Heart left ventricle (tissue), 16 donors: ENCODE measurements at regions of chr9 and their contacts with region 1.

Region 1: GRCh38 chr9:129884220-129885017 is 49.2 kb downstream of the USP20 start:
- DNase-seq: peak; percentile 86 to 95 (median 89)
- ATAC-seq: peak; percentile 61 to 78 (median 76)
- H3K4me3 ChIP-seq: peak overlapping the region in 11 of 12 donors; percentile 1 to 57 (median 48)
- H3K27ac ChIP-seq: peak overlapping the region; percentile 12 to 94 (median 84)
- H3K4me1 ChIP-seq: peaks cover 3 to 61% (median 38%) of the 10 kb centered on the region in 12 donors
- H3K27me3 ChIP-seq: no peaks in the 10 kb centered on the region
- CTCF ChIP-seq: no peak
- POLR2A ChIP-seq: no peak

Region 2: DNA sequence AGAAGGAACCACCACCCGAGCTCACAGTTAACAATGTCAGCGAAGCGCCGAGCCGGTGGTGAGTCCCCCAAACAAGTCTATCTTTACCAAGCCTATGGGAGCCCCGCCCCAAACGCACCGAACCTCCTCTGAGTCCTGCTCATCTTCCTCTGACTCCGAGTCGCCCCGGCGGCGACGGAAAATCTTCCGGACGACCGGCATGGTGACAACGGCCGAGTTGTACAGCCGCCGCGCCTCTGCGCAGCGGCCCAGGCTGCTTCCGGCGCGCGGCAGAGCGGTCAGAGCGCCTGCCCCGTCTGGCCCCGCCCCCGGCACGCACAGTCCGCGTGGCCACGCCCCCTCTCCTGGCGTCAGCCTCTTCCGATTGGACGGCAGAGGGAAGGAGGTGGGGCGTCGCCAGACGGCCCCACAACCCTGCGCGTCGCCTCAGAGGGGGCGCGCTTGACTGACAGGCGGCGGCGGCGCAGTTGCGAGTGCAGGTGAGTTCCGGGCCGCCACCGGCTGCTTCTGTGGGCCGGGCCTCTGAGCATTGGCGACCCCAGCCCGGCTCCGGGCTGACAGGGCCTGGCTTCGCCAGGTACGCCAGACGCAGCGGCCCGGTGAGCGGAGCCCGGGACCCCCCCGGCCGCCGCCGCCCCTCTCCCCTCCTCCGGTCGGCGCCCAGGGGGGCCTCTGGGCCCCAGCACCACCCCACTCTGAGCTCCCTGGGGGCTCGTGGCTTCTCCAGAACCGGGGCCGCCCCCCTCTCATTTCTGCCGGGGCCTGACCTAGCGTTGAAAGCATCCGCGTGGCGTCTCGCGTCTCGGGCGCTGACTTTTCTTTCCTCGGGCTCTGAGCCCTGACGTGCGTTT is 49.2 kb before region 1 on chr9 and contains the starts of genes C9orf78 and USP20:
- intact Hi-C with region 1: loop called in 1 of 10 experiments (anchors 2 kb)
- DNase-seq: peak; percentile 96 to 98 (median 97)
- ATAC-seq: peak; percentile 99 to 100 (median 100)
- H3K4me3 ChIP-seq: peak within 1 kb of the TSS; percentile 72 to 100 (median 88)
- H3K27ac ChIP-seq: peak within 1 kb of the TSS in 11 of 12 donors; percentile 61 to 96 (median 83)
- H3K4me1 ChIP-seq: peaks cover 0 to 42% (median 18%) of the 10 kb centered on the region in 12 donors
- H3K27me3 ChIP-seq: no peaks in the 10 kb centered on the region
- CTCF ChIP-seq: peak in 2 of 12 donors; percentile 16 to 25
- POLR2A ChIP-seq: peak; percentile 78 to 94
- total RNA-seq, gene C9orf78: 28.4 to 54.8 (median 32.5) TPM
- total RNA-seq, gene USP20: 9.5 to 19.7 (median 13.1) TPM

Region 3: GRCh38 chr9:130042833-130043653 is 158.6 kb after region 1 on chr9 and contains the start of gene FNBP1:
- intact Hi-C with region 1: loop called in 6 of 10 experiments (anchors 1 to 5 kb)
- DNase-seq: peak; percentile 85 to 92 (median 88)
- ATAC-seq: peak; percentile 77 to 96 (median 93)
- H3K4me3 ChIP-seq: peak within 1 kb of the TSS; percentile 65 to 97 (median 94)
- H3K27ac ChIP-seq: peak within 1 kb of the TSS; percentile 89 to 97 (median 94)
- H3K4me1 ChIP-seq: peaks cover 0 to 67% (median 24%) of the 10 kb centered on the region in 12 donors
- H3K27me3 ChIP-seq: no peaks in the 10 kb centered on the region
- CTCF ChIP-seq: no peak
- POLR2A ChIP-seq: peak; percentile 9 to 81
- total RNA-seq, gene FNBP1: 16.6 to 47.3 (median 24.8) TPM

Region 4: DNA sequence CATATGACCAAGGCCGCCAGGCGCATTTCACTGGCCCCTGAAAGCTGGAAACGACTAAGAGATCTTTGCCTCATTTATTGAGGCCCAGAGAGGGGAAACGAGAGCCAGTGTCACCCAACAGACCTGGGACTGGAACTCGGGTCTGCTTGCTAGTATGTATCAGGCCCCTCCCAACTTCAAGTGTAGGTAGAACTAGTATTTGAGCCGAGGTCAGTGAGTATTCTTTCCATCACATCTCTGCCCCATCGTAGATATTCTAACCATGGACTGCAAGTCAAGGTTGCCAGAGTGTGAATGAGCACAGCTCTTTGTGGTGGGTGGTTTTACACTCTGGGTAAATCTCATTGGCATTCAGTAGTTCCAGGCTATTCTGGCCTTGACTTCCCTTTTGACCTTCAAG is 211.5 kb after region 1 on chr9:
- intact Hi-C with region 1: loop called in 9 of 10 experiments (anchors 2 to 10 kb)
- DNase-seq: no peak
- ATAC-seq: no peak
- H3K4me3 ChIP-seq: no peak overlapping the region
- H3K27ac ChIP-seq: no peak overlapping the region
- H3K4me1 ChIP-seq: peaks cover 0 to 10% (median 0%) of the 10 kb centered on the region in 12 donors
- H3K27me3 ChIP-seq: no peaks in the 10 kb centered on the region
- CTCF ChIP-seq: no peak
- POLR2A ChIP-seq: no peak

Region 5: DNA sequence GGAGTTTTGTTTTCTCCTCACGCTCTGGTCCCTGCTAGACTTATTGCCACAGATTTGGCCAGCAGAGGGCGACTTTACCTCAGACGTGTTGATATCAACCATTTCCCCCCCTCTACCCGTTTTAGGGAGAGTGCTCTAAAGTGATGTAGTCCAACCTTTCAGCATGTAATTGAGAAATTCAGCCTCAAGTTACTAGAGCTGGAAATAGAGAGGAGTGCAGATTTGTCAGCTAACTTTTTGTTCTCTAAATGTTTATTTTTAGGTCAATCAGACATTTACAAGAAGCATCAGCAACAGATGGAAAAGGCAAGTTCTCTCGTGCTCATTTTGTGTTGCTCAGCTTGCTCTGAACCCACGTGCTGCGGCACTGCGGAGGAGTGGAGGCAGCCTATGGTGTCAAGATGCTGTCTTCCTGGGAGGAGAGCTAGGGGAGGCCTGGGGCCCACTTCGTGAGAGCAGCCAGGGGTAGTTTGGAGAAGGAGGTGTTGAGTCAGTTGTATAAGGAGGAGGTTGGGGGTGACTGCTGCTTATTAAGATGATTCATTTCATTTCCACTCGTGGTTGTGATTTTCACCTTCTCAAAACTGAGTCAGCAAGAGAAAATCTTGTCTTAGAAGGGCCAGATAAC is 222.9 kb after region 1 on chr9:
- intact Hi-C with region 1: loop called in 6 of 10 experiments (anchors 2 to 10 kb)
- DNase-seq: peak; percentile 69 to 91 (median 79)
- ATAC-seq: peak in 3 of 4 donors; percentile 80 to 87 (median 86)
- H3K4me3 ChIP-seq: no peak overlapping the region
- H3K27ac ChIP-seq: peak overlapping the region in 1 of 12 donors; percentile 73
- H3K4me1 ChIP-seq: peaks cover 0 to 9% (median 0%) of the 10 kb centered on the region in 12 donors
- H3K27me3 ChIP-seq: no peaks in the 10 kb centered on the region
- CTCF ChIP-seq: peak; percentile 69 to 86 (median 80)
- POLR2A ChIP-seq: no peak

Region 6: DNA sequence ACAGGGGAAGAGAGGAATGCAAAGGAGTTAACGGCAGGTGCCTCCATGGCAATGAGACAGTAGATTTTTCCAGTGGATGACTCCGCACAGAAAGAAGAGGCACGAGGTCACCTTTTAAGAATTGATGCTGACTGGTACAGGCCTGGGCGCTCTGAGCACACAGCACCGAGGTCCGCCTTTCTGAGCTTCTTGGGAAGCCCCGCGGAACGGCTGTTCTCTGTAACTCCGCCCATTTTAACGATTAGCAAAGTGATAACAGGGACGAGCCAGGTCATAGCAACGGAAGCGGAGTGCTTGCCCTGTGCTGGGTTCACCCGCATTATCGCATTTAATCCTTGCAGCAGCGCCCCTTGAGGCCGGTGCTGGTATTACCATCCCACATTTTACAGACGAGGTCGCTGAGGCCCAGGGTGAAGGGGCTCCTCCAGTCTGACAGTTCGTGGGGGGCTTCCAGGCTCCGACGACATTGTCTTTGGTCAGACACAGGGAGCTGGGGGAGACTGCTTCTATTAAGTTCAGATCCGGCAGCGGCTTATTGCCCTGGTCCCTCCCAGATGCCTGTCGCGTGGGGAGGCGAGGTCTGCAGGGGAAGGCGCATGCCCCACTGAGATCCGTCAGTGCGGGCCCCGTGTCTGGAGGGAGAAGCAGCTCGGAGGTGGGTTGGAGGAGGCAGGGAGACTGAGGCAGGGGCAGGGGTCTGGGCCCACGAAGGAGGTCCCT is 358.8 kb after region 1 on chr9:
- intact Hi-C with region 1: loop called in 8 of 10 experiments (anchors 5 to 10 kb)
- DNase-seq: peak; percentile 50 to 81 (median 60)
- ATAC-seq: peak; percentile 63 to 72 (median 70)
- H3K4me3 ChIP-seq: peak overlapping the region in 2 of 12 donors; percentile 18 to 35
- H3K27ac ChIP-seq: no peak overlapping the region
- H3K4me1 ChIP-seq: peaks cover 0 to 9% (median 3%) of the 10 kb centered on the region in 12 donors
- H3K27me3 ChIP-seq: no peaks in the 10 kb centered on the region
- CTCF ChIP-seq: peak; percentile 83 to 97 (median 92)
- POLR2A ChIP-seq: no peak